ENCODE measurements at regions of chr19 and their contacts with region 1.

Region 1: GRCh38 chr19:29610563-29611271 is 4.6 kb downstream of the POP4 start:
- DNase-seq: peak; percentile 95 to 99 (median 98)
- H3K4me3 ChIP-seq: no peak overlapping the region
- H3K27ac ChIP-seq: peak overlapping the region; percentile 59 to 73
- H3K4me1 ChIP-seq: peaks cover 3 to 18% (median 16%) of the 10 kb centered on the region in 4 experiments
- H3K27me3 ChIP-seq: no peaks in the 10 kb centered on the region

Region 2: DNA sequence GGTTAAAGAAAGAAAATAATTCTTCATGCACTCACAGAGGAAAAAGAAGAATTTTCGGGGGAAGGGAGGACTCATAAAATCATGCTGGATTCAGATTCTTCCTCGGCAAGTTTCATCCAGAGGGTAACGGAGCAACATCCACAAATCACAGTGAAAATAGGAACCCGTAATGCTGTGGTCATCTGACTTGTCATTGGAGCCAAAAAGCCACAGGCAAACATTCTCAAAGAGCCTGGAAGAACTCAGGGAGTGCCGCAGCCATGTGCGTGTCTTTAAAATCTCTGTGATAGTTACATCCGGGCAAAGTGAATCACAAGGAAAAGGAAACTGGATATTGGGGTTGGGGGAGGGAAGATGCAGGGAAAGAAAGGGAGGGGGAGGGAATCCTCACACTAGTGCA is 117.9 kb before region 1 on chr19:
- CTCF ChIA-PET with region 1: no interaction called
- POLR2A ChIA-PET with region 1: no interaction called
- DNase-seq: no peak
- H3K4me3 ChIP-seq: no peak overlapping the region
- H3K27ac ChIP-seq: no peak overlapping the region
- H3K4me1 ChIP-seq: no peaks in the 10 kb centered on the region
- H3K27me3 ChIP-seq: peaks cover 0 to 30% (median 9%) of the 10 kb centered on the region in 5 experiments

Region 3: GRCh38 chr19:29588095-29588494 is 22.6 kb before region 1 on chr19:
- CTCF ChIA-PET with region 1: no interaction called
- POLR2A ChIA-PET with region 1: no interaction called
- DNase-seq: no peak
- H3K4me3 ChIP-seq: no peak overlapping the region
- H3K27ac ChIP-seq: no peak overlapping the region
- H3K4me1 ChIP-seq: no peaks in the 10 kb centered on the region
- H3K27me3 ChIP-seq: peaks cover 2 to 41% (median 11%) of the 10 kb centered on the region in 5 experiments

Region 4: DNA sequence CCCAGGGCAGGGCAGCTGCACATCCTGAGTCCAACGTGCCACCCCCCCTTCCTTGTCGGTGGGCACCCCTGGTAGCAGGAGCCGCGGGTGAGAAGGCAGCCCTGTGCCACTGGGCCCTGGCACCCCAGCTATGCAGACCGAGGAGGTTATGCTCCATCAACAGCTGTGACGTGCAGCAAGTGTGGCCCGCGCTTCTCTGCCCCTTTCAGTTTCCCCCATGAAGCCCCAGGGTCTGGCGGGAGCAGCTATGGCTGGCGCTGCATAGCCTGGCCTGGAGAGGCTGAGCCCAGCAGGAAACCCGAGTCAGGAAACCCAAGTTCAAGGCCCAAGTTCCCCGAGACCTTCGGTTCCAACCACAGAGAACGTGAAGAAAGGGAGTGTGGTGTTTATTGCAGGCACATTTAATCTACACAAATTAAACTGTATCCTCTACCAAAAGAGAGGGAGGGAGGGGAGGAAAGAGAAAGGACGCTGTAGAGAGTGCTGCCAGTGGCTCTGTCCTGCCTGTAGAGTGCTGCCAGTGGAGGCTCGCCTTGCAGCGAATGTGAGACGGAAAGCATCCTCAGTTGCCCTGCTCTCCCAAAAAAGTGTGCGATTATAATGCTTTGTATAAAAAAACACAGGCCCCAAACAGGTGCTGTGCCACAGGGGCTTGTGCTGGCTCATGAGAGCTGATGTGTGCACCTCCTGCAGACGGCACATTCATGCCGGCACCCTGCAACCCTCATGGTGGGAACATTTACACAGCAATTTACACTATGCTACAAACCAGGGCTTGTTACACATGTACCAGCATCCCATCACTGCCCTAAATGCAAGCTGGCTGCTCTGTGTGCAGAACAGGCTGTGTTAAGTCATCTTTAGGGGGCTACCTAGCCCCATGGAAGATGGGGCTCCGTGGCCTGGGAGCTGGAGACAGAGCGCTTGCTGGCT is 11.7 kb after region 1 on chr19:
- CTCF ChIA-PET with region 1: interaction called, 44 read pairs
- POLR2A ChIA-PET with region 1: interaction called, 3 read pairs
- DNase-seq: peak; percentile 62 to 86 (median 72)
- H3K4me3 ChIP-seq: peak overlapping the region in 4 of 7 experiments; percentile 6 to 53 (median 26)
- H3K27ac ChIP-seq: no peak overlapping the region
- H3K4me1 ChIP-seq: peaks cover 0 to 42% (median 21%) of the 10 kb centered on the region in 4 experiments
- H3K27me3 ChIP-seq: no peaks in the 10 kb centered on the region

Region 5: DNA sequence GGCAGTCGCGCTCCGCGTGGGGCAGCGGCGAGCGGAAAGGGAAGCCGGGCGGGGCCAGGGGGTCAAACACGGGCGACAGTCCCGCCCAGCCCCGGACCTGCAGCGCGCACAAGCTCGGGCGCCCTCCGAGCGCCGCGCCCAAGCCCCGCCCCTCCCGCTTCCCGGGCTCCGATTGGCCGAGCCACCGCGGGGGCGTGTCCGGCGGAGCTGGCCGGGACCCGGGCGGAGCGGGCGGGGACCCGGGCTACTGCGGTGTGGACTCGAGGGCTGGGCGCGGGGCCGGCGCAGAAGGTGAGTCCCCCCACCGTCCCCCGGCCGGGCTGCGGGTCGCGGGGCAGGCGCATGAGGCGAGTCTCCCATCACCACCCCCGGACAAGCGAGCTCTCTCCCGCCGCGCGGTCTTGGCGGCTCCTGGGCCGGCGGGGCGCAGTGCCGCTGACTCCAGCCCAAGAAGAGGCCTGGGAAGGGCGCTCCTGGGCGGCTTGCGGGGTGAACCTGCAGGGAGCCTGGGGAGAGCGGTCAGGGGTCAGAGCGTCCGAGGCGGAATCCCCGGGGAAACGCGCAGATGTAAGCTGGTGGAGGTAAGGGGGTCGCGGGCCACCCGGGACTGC is 54.6 kb after region 1 on chr19 and contains the start of gene PLEKHF1:
- CTCF ChIA-PET with region 1: interaction called, 93 read pairs
- POLR2A ChIA-PET with region 1: no interaction called
- DNase-seq: peak; percentile 68 to 82 (median 77)
- H3K4me3 ChIP-seq: peak within 1 kb of the TSS; percentile 56 to 87 (median 80)
- H3K27ac ChIP-seq: no peak within 1 kb of the TSS
- H3K4me1 ChIP-seq: peaks cover 0 to 47% (median 37%) of the 10 kb centered on the region in 4 experiments
- H3K27me3 ChIP-seq: no peaks in the 10 kb centered on the region

Region 6: GRCh38 chr19:29680447-29680846 is 69.7 kb after region 1 on chr19:
- CTCF ChIA-PET with region 1: interaction called, 10 read pairs
- POLR2A ChIA-PET with region 1: interaction called, 3 read pairs
- DNase-seq: peak; percentile 80 to 85 (median 83)
- H3K4me3 ChIP-seq: peak overlapping the region in 3 of 7 experiments; percentile 13 to 45 (median 23)
- H3K27ac ChIP-seq: peak overlapping the region in 1 of 2 experiments; percentile 4
- H3K4me1 ChIP-seq: peaks cover 0 to 38% (median 30%) of the 10 kb centered on the region in 4 experiments
- H3K27me3 ChIP-seq: no peaks in the 10 kb centered on the region

Region 7: GRCh38 chr19:29694669-29695627 is 84.2 kb after region 1 on chr19:
- CTCF ChIA-PET with region 1: interaction called, 77 read pairs
- POLR2A ChIA-PET with region 1: no interaction called
- DNase-seq: peak; percentile 74 to 85 (median 83)
- H3K4me3 ChIP-seq: no peak overlapping the region
- H3K27ac ChIP-seq: no peak overlapping the region
- H3K4me1 ChIP-seq: peaks cover 0 to 2% (median 0%) of the 10 kb centered on the region in 4 experiments
- H3K27me3 ChIP-seq: no peaks in the 10 kb centered on the region

Region 8: DNA sequence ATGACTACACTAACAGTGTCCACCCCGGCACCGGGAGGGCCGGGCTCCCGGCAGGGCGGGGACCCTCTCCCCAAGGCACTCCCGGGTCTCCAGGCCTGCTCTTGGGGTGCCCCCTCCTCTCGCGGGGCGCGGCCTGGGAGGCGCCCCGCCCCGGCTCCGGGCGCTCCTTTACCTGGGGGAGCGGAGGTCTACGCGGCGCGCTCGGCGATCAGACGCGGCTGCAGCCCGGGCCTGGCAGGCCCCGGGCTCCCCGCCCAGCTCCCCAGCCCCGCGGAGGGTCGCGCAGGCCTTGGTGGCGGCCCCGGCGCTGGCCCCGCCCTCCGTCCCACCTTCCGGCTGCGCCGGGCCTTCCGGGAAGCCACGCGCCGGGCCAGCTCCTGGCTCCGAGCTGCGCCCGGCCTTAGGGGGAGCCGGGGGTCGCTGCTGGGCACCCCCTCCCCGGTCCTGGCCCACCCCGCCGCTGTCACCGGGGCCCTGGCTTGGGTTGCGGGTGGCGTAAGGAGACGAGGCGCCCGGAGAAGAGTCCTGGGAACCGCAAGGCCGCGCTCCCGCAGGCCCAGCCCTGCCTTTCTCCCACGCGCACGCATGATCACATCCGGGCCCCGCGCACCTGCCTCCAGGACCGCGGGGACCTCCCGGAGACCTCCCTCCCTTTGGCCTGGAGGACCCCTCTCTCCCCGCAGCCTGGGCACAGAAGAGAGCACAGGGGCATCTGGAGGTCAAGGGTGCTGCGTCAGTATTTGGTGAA is 104.4 kb after region 1 on chr19 and contains the start of gene C19orf12:
- CTCF ChIA-PET with region 1: interaction called, 113 read pairs
- POLR2A ChIA-PET with region 1: interaction called, 6 read pairs
- DNase-seq: peak; percentile 32 to 62 (median 47)
- H3K4me3 ChIP-seq: peak within 1 kb of the TSS; percentile 73 to 93 (median 84)
- H3K27ac ChIP-seq: peak within 1 kb of the TSS; percentile 74 to 90
- H3K4me1 ChIP-seq: peaks cover 7 to 52% (median 45%) of the 10 kb centered on the region in 4 experiments
- H3K27me3 ChIP-seq: no peaks in the 10 kb centered on the region

Region 9: DNA sequence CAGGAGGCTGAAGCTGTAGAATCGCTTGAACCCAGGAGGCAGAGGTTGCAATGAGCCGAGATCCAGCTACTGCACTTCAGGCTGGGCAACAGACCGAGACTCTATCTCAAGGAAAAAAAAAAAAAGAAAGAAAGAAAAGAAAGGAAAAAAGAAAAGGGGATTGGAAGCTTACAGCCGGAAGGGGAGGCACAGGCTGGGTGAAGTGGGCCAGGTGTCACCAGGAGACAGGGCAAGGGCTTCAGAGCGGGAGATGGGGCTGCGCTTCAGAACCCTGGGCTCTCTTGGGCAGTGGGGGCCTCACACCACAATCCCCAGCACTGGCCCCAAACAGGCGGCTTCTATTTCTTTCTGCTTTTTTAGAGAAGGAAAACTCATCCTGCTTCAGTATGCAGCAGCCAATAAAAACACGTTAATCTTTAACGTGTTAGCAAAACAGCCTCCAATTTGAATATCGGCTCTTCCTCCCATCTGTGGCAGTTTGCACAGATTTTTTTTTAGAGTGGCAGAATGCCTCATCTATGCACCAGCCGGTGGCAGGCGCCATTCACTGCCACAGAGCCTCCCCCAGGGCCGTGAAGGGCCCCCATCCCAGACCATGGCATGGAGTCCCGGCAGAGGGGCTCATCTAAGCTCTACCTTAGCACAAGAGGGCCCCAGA is 151.0 kb after region 1 on chr19:
- CTCF ChIA-PET with region 1: no interaction called
- POLR2A ChIA-PET with region 1: no interaction called
- DNase-seq: no peak
- H3K4me3 ChIP-seq: no peak overlapping the region
- H3K27ac ChIP-seq: no peak overlapping the region
- H3K4me1 ChIP-seq: peaks cover 0 to 3% (median 1%) of the 10 kb centered on the region in 4 experiments
- H3K27me3 ChIP-seq: no peaks in the 10 kb centered on the region

Measured in common myeloid progenitor, CD34-positive (primary cell).